Transverse colon (tissue), 4 donors: ENCODE measurements at regions of chr22 and their contacts with region 1.

Region 1: GRCh38 chr22:40636380-40637182 is at the start of gene MRTFA:
- DNase-seq: peak; percentile 100
- H3K4me3 ChIP-seq: peak within 1 kb of the TSS; percentile 73 to 100 (median 84)
- H3K27ac ChIP-seq: peak within 1 kb of the TSS; percentile 91 to 98 (median 95)
- H3K4me1 ChIP-seq: peaks cover 0 to 53% (median 25%) of the 10 kb centered on the region in 4 donors
- H3K27me3 ChIP-seq: no peaks in the 10 kb centered on the region
- CTCF ChIP-seq: peak in 1 of 5 experiments; percentile 15
- EP300 ChIP-seq: no peak
- POLR2A ChIP-seq: peak; percentile 99
- total RNA-seq, gene MRTFA: 46.0 to 408 (median 90.0) TPM

Region 2: GRCh38 chr22:40436505-40437451 is 199.8 kb before region 1 on chr22:
- in situ Hi-C with region 1: loop called (anchors 5 to 10 kb)
- intact Hi-C with region 1: no loop called
- DNase-seq: peak; percentile 31
- H3K4me3 ChIP-seq: peak overlapping the region in 1 of 4 donors; percentile 30
- H3K27ac ChIP-seq: peak overlapping the region; percentile 50 to 78 (median 68)
- H3K4me1 ChIP-seq: peaks cover 0 to 51% (median 15%) of the 10 kb centered on the region in 4 donors
- H3K27me3 ChIP-seq: no peaks in the 10 kb centered on the region
- CTCF ChIP-seq: peak; percentile 62 to 78 (median 72)
- EP300 ChIP-seq: no peak
- POLR2A ChIP-seq: no peak

Region 3: GRCh38 chr22:40509401-40510134 is 127.0 kb before region 1 on chr22:
- in situ Hi-C with region 1: no loop called
- intact Hi-C with region 1: loop called (anchors 10 kb)
- DNase-seq: peak; percentile 53
- H3K4me3 ChIP-seq: no peak overlapping the region
- H3K27ac ChIP-seq: peak overlapping the region; percentile 74 to 87 (median 80)
- H3K4me1 ChIP-seq: peaks cover 16 to 52% (median 46%) of the 10 kb centered on the region in 4 donors
- H3K27me3 ChIP-seq: no peaks in the 10 kb centered on the region
- CTCF ChIP-seq: no peak
- EP300 ChIP-seq: no peak
- POLR2A ChIP-seq: no peak

Region 4: DNA sequence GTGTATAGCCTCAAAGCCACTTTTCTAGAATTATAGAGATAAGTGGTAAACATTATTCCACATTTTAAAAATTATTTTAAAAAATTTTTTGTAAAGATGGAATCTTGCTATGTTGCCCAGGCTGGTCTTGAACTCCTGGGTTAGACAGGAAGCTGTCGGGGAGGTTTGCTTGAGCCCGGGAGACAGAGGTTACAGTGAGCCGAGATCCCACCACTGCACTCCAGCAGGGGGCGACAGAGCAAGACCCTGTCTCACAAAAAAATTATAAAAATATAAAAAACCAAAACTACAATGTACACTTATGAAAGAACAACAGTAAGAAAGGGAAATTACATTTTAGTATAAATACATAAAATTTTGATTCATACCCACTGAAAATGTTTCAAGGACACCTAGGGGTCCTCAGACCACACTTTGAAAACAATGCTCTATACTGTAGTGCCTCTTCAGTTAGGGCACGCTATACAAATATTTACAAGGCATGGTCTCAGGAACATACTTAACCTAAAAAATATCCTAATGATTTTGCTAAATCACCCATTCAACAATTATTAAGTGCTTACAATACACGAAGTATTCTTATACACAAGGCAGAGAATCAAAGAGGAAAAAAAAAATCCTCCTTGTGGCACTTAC is 111.2 kb before region 1 on chr22:
- in situ Hi-C with region 1: loop called in 2 of 4 experiments (anchors 10 to 25 kb)
- intact Hi-C with region 1: no loop called
- DNase-seq: peak; percentile 51
- H3K4me3 ChIP-seq: no peak overlapping the region
- H3K27ac ChIP-seq: peak overlapping the region in 1 of 4 donors; percentile 35
- H3K4me1 ChIP-seq: peaks cover 0 to 26% (median 8%) of the 10 kb centered on the region in 4 donors
- H3K27me3 ChIP-seq: no peaks in the 10 kb centered on the region
- CTCF ChIP-seq: peak; percentile 64 to 77 (median 70)
- EP300 ChIP-seq: no peak
- POLR2A ChIP-seq: no peak

Region 5: DNA sequence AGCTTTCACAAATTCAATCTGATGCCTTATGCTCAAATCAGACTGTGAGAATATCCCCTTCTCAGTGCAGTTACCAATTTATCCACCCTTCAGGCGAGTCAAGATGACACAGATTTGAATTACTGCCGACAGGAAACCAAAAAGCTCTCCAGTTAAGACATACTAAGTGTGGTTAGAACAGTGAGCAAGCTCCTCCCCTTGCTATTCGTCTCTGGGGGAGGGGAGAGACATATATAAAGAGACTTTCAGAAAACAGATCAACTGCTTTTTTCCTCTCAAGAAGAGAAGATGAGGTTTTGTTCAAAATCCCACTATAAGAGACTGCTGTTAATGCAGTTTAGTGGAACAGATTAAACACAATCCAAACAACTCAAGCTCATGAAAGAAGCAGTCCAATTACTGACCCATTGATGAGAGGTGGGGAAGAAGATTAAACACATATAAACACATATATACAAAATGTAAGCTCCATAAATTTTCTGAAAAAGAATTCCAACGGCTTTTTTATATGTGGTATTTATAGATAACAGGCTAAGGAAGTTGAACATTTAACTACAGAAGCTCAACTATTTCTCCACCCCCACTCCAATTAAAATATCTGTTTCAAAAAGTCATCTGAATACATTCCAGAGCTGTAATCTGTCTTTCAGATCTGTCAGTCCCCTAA is 102.7 kb before region 1 on chr22:
- in situ Hi-C with region 1: loop called in 2 of 4 experiments (anchors 10 to 25 kb)
- intact Hi-C with region 1: no loop called
- DNase-seq: peak; percentile 19
- H3K4me3 ChIP-seq: peak overlapping the region in 2 of 4 donors; percentile 0 to 23
- H3K27ac ChIP-seq: peak overlapping the region; percentile 38 to 63 (median 52)
- H3K4me1 ChIP-seq: peaks cover 17 to 52% (median 34%) of the 10 kb centered on the region in 4 donors
- H3K27me3 ChIP-seq: no peaks in the 10 kb centered on the region
- CTCF ChIP-seq: no peak
- EP300 ChIP-seq: no peak
- POLR2A ChIP-seq: no peak